ENCODE measurements at regions of chr1 and their contacts with region 1.

Region 1: GRCh38 chr1:226798427-226799411 is 59.6 kb upstream of the ITPKB start:
- DNase-seq: no peak
- H3K4me3 ChIP-seq: no peak overlapping the region
- H3K27ac ChIP-seq: peak overlapping the region in 1 of 2 donors; percentile 53
- H3K4me1 ChIP-seq: no peaks in the 10 kb centered on the region
- H3K27me3 ChIP-seq: no peaks in the 10 kb centered on the region
- CTCF ChIP-seq: no peak
- POLR2A ChIP-seq: no peak

Region 2: GRCh38 chr1:226741009-226741408 is 57.7 kb before region 1 on chr1:
- intact Hi-C with region 1: loop called (anchors 2 kb)
- DNase-seq: no peak
- H3K4me3 ChIP-seq: no peak overlapping the region
- H3K27ac ChIP-seq: no peak overlapping the region
- H3K4me1 ChIP-seq: peaks cover 5 to 6% of the 10 kb centered on the region in 2 donors
- H3K27me3 ChIP-seq: no peaks in the 10 kb centered on the region
- CTCF ChIP-seq: no peak
- POLR2A ChIP-seq: no peak

Region 3: DNA sequence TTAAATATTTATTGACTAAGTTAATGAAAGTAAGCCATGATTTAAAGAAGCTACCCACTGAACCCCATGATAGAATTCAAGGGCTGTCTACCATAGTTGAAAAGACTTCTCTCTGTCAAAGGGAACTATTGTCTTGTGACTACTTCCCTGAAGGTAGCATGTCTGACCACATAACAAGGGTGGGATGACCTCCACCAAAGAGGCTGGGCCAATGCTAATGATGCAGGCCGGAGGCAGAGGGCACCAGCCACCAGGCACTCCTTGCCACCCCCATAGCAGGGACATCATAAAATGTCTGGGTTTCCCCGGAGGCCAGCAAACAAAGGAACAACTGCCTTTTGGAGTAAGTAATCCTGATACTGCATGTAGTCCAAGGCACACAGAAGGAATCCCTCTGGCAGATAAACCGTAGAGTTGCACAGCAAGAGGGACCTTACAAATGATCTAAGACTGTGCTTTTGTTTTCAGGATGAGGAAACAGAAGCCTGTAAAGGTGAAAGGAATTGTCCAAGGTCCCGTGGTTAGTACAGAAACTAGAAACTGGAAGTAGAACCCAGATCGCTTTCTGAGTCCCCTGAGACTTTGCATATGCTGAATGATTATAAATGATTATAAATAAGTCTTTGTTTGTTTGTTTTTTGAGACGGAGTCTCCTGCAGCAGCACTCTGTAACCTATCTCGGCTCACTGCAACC is 26.1 kb before region 1 on chr1:
- intact Hi-C with region 1: no loop called
- DNase-seq: no peak
- H3K4me3 ChIP-seq: no peak overlapping the region
- H3K27ac ChIP-seq: no peak overlapping the region
- H3K4me1 ChIP-seq: no peaks in the 10 kb centered on the region
- H3K27me3 ChIP-seq: no peaks in the 10 kb centered on the region
- CTCF ChIP-seq: no peak
- POLR2A ChIP-seq: no peak

Region 4: GRCh38 chr1:227134686-227135314 is 336.1 kb after region 1 on chr1:
- intact Hi-C with region 1: loop called (anchors 5 kb)
- DNase-seq: no peak
- H3K4me3 ChIP-seq: no peak overlapping the region
- H3K27ac ChIP-seq: no peak overlapping the region
- H3K4me1 ChIP-seq: no peaks in the 10 kb centered on the region
- H3K27me3 ChIP-seq: no peaks in the 10 kb centered on the region
- CTCF ChIP-seq: no peak
- POLR2A ChIP-seq: no peak

Region 5: GRCh38 chr1:227913764-227914721 is 1115.3 kb after region 1 on chr1:
- intact Hi-C with region 1: no loop called
- DNase-seq: no peak
- H3K4me3 ChIP-seq: no peak overlapping the region
- H3K27ac ChIP-seq: no peak overlapping the region
- H3K4me1 ChIP-seq: no peaks in the 10 kb centered on the region
- H3K27me3 ChIP-seq: no peaks in the 10 kb centered on the region
- CTCF ChIP-seq: no peak
- POLR2A ChIP-seq: no peak